T-cell (primary cell): ENCODE measurements at regions of chr4 and their contacts with region 1.

Region 1: GRCh38 chr4:83651502-83652245 is 115.8 kb downstream of the GPAT3 start:
- DNase-seq: no peak
- ATAC-seq: no peak
- H3K4me3 ChIP-seq: no peak overlapping the region
- H3K4me3 Mint-ChIP-seq: no peak overlapping the region
- H3K27ac ChIP-seq: no peak overlapping the region
- H3K27ac Mint-ChIP-seq: no peak overlapping the region
- H3K4me1 ChIP-seq: no peaks in the 10 kb centered on the region
- H3K4me1 Mint-ChIP-seq: no peaks in the 10 kb centered on the region
- H3K27me3 ChIP-seq: peaks cover 0 to 9% of the 10 kb centered on the region in 2 experiments
- H3K27me3 Mint-ChIP-seq: peaks cover 4 to 8% of the 10 kb centered on the region in 2 donors

Region 2: DNA sequence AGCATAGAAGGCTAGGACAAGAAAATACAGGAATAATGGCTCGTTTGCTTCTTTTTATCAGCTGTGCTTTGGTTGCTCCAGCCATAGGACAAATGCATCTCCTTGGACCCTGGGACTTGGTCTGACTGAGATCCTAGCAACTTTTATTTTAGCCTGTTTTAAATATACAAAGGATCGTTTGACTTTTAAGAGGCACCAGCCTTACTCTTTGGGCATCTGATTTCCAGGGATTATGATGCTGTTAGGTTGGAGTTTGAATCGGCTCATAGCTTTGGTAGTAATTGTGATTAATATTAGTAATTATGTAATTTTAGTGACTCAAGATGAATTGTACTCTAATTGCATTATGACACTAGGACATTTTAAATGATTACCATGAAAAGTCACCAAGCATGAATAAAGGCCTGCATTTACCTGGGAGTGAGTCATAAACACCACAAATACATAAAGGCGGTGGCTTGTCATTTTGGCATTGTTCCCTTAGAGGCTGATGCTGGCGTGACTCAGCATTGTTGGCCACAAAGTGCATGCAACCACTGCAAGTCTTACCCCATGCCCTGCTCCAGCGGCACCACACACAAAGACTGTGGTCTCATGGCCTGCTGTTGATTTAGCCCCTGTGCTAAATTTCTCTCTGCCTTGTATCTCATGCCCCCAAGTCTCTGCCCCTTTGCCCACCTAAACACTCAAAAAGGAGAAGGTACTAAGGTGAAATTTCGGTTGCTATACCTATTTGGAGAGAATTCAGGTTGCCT is 103.3 kb before region 1 on chr4:
- CTCF ChIA-PET with region 1: no interaction called
- POLR2A ChIA-PET with region 1: interaction called in 1 of 2 experiments, 14 read pairs
- DNase-seq: peak in 28 of 35 experiments; percentile 3 to 47 (median 20)
- ATAC-seq: peak; percentile 39 to 98 (median 78)
- H3K4me3 ChIP-seq: no peak overlapping the region
- H3K4me3 Mint-ChIP-seq: no peak overlapping the region
- H3K27ac ChIP-seq: no peak overlapping the region
- H3K27ac Mint-ChIP-seq: peak overlapping the region in 1 of 2 donors; percentile 48
- H3K4me1 ChIP-seq: no peaks in the 10 kb centered on the region
- H3K4me1 Mint-ChIP-seq: peaks cover 0 to 9% (median 5%) of the 10 kb centered on the region in 3 donors
- H3K27me3 ChIP-seq: no peaks in the 10 kb centered on the region
- H3K27me3 Mint-ChIP-seq: peaks cover 0 to 3% of the 10 kb centered on the region in 2 donors

Region 3: GRCh38 chr4:83664741-83665140 is 13.1 kb after region 1 on chr4:
- CTCF ChIA-PET with region 1: no interaction called
- POLR2A ChIA-PET with region 1: no interaction called
- DNase-seq: no peak
- ATAC-seq: no peak
- H3K4me3 ChIP-seq: no peak overlapping the region
- H3K4me3 Mint-ChIP-seq: no peak overlapping the region
- H3K27ac ChIP-seq: no peak overlapping the region
- H3K27ac Mint-ChIP-seq: no peak overlapping the region
- H3K4me1 ChIP-seq: no peaks in the 10 kb centered on the region
- H3K4me1 Mint-ChIP-seq: peaks cover 11 to 15% (median 14%) of the 10 kb centered on the region in 3 donors
- H3K27me3 ChIP-seq: no peaks in the 10 kb centered on the region
- H3K27me3 Mint-ChIP-seq: peaks cover 8 to 13% of the 10 kb centered on the region in 2 donors

Region 4: DNA sequence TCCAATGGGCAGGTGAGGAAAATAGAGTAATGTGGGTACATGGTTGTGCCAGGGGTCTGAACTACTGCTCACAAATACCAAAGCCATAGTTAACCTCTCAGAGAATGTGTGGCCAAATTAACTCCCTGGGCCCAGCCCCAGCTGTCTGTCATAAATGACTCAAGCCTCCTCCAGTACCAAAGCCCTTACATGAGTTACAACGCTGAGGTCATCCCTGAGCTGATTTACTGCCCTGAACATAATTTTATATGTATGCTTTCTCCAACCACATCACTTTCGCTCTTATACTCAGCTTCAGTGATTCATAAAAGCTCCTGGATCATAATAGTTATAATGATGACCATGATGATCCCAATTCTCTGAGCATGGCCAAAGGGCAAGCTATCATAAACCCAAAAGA is 563.5 kb after region 1 on chr4:
- CTCF ChIA-PET with region 1: no interaction called
- POLR2A ChIA-PET with region 1: no interaction called
- DNase-seq: no peak
- ATAC-seq: no peak
- H3K4me3 ChIP-seq: no peak overlapping the region
- H3K4me3 Mint-ChIP-seq: no peak overlapping the region
- H3K27ac ChIP-seq: no peak overlapping the region
- H3K27ac Mint-ChIP-seq: no peak overlapping the region
- H3K4me1 ChIP-seq: no peaks in the 10 kb centered on the region
- H3K4me1 Mint-ChIP-seq: no peaks in the 10 kb centered on the region
- H3K27me3 ChIP-seq: no peaks in the 10 kb centered on the region
- H3K27me3 Mint-ChIP-seq: no peaks in the 10 kb centered on the region